Right lobe of liver (tissue), 6 donors: ENCODE measurements at regions of chr19 and their contacts with region 1.

Region 1: GRCh38 chr19:12847159-12848139 is 9.1 kb downstream of the MAST1 start:
- DNase-seq: peak; percentile 83 to 85 (median 84)
- ATAC-seq: peak; percentile 97 to 100 (median 99)
- H3K4me3 ChIP-seq: no peak overlapping the region
- H3K27ac ChIP-seq: no peak overlapping the region
- H3K4me1 ChIP-seq: peaks cover 0 to 7% (median 0%) of the 10 kb centered on the region in 4 donors
- H3K27me3 ChIP-seq: no peaks in the 10 kb centered on the region
- CTCF ChIP-seq: peak; percentile 97 to 100 (median 99)
- POLR2A ChIP-seq: no peak

Region 2: GRCh38 chr19:12766051-12766521 is 81.4 kb before region 1 on chr19:
- intact Hi-C with region 1: loop called in 1 of 2 experiments (anchors 10 kb)
- DNase-seq: peak in 2 of 3 donors; percentile 75 to 77
- ATAC-seq: peak; percentile 67 to 88 (median 78)
- H3K4me3 ChIP-seq: peak overlapping the region in 1 of 3 donors; percentile 33
- H3K27ac ChIP-seq: no peak overlapping the region
- H3K4me1 ChIP-seq: no peaks in the 10 kb centered on the region
- H3K27me3 ChIP-seq: no peaks in the 10 kb centered on the region
- CTCF ChIP-seq: peak; percentile 45 to 89 (median 56)
- POLR2A ChIP-seq: no peak